ENCODE measurements at regions of chr12 and their contacts with region 1.

Region 1: DNA sequence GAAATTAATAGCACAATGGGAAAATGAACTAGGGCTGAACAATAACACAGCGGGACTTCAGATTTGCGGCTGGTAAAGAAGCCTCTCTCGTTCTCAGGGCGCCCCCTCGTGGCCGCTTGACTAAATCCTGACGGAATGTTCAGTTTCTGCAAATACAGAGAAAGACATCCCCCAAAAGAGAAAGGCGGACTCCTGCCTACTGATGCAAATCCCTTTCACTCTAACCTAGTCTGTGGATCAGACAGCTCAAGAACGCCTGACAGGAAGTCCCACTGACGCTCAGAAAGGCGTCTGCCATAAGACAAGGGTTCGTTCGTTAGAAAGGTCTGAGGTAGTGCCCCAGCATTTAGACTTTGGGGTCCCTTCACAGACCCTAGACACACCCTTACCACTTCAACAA is 2.5 kb downstream of the NUAK1 start:
- DNase-seq: peak; percentile 90 to 97
- ATAC-seq: peak; percentile 59
- H3K4me3 ChIP-seq: peak overlapping the region; percentile 37 to 80
- H3K27ac ChIP-seq: peak overlapping the region; percentile 81 to 89
- H3K4me1 ChIP-seq: peaks cover 2 to 8% of the 10 kb centered on the region in 2 donors
- H3K27me3 ChIP-seq: no peaks in the 10 kb centered on the region

Region 2: GRCh38 chr12:105705765-105706164 is 430.5 kb before region 1 on chr12:
- intact Hi-C with region 1: loop called (anchors 2 kb)
- DNase-seq: peak in 1 of 2 donors; percentile 54
- ATAC-seq: peak; percentile 79
- H3K4me3 ChIP-seq: no peak overlapping the region
- H3K27ac ChIP-seq: peak overlapping the region; percentile 80 to 93
- H3K4me1 ChIP-seq: no peaks in the 10 kb centered on the region
- H3K27me3 ChIP-seq: no peaks in the 10 kb centered on the region

Region 3: GRCh38 chr12:105748806-105749600 is 387.3 kb before region 1 on chr12:
- intact Hi-C with region 1: loop called (anchors 5 to 10 kb)
- DNase-seq: peak; percentile 87
- ATAC-seq: peak; percentile 79
- H3K4me3 ChIP-seq: no peak overlapping the region
- H3K27ac ChIP-seq: peak overlapping the region; percentile 83 to 96
- H3K4me1 ChIP-seq: peaks cover 5 to 9% of the 10 kb centered on the region in 2 donors
- H3K27me3 ChIP-seq: no peaks in the 10 kb centered on the region

Region 4: DNA sequence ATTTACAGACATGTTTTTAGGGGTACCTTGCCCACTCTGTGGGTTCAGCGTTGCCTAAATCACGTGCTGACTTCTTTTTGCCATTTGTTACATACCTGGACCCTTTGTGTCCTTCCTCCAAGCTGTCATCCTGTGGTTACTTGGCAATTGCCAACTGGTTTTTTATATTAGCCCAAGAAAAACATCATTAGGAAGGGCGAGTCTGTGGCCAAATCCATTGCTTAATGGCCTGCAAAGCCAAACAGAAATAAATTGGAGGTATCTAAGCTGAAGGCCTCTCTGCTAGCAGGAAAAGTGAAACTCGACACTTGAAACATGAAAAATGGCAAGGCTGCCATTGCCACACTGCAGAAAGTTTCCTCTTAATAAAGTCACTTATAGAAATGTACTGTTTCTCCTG is 187.9 kb before region 1 on chr12:
- intact Hi-C with region 1: loop called in 1 of 2 experiments (anchors 2 kb)
- DNase-seq: peak in 1 of 2 donors; percentile 50
- ATAC-seq: peak; percentile 64
- H3K4me3 ChIP-seq: no peak overlapping the region
- H3K27ac ChIP-seq: peak overlapping the region; percentile 65 to 76
- H3K4me1 ChIP-seq: peaks cover 2 to 12% of the 10 kb centered on the region in 2 donors
- H3K27me3 ChIP-seq: no peaks in the 10 kb centered on the region

Region 5: GRCh38 chr12:106074706-106075392 is 61.4 kb before region 1 on chr12:
- intact Hi-C with region 1: no loop called
- DNase-seq: peak in 1 of 2 donors; percentile 45
- ATAC-seq: peak; percentile 55
- H3K4me3 ChIP-seq: no peak overlapping the region
- H3K27ac ChIP-seq: peak overlapping the region; percentile 68 to 69
- H3K4me1 ChIP-seq: peaks cover 3 to 14% of the 10 kb centered on the region in 2 donors
- H3K27me3 ChIP-seq: no peaks in the 10 kb centered on the region

Region 6: DNA sequence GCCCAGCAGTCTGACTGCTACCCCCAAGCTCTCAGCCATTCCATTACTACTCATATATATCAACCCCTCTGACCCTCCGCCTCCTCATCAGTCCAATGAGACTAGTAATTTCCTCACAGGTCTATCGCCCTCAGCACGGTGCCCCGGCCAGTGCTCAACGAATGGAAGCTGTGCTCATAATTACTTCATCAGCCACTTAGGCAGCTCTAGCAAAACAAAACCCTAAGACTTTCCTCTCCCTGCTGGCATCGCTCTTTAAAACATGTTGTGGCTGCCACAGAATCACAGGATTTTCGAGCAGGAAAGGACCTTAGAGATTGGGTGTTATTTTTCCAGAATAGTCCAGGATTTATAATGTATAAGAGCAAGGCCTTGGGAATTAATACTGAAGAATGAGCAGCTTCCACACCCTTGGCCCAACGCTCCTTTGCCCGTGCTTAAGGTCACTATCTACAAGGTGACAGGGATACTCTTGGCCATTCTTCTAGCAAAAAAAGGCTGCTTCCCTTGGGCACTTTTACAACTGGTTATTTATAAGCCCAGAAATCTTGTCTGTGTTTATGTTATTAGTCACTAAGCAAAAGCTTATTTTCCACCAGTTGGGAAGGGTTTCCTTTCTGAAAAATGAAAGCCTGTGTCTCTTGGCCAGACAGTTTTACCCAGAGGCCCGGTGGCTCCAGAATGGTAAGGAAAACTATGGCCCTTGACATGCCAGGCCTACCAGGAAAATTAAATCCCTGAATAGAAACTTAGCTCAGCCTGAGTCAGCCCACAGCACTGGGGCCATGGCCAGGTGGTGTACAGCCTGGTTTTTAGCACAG is 45.5 kb before region 1 on chr12:
- intact Hi-C with region 1: loop called (anchors 5 kb)
- DNase-seq: peak; percentile 85 to 86
- ATAC-seq: peak; percentile 87
- H3K4me3 ChIP-seq: no peak overlapping the region
- H3K27ac ChIP-seq: peak overlapping the region; percentile 79 to 99
- H3K4me1 ChIP-seq: peaks cover 2 to 13% of the 10 kb centered on the region in 2 donors
- H3K27me3 ChIP-seq: no peaks in the 10 kb centered on the region

Region 7: DNA sequence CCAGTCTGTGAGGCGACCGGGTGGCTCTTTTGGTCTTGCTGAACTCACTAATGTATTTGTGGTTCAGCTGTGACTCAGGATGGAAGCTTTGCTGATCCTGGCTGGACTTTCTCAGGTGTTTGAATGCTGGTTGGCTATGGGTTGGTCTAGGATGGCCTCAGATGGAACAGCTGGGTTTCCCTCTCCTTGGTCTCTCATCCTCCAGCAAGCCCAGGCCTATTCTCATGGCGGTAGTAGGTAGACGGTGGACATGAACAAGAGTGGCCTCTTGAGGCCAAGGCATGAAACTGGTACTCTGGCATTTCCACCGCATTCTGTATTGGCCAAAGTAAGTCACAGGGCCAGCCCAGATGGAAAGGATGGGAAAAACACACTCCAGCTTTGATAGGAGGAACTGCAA is 209.5 kb after region 1 on chr12:
- intact Hi-C with region 1: no loop called
- DNase-seq: no peak
- ATAC-seq: no peak
- H3K4me3 ChIP-seq: no peak overlapping the region
- H3K27ac ChIP-seq: no peak overlapping the region
- H3K4me1 ChIP-seq: peaks cover 0 to 4% of the 10 kb centered on the region in 2 donors
- H3K27me3 ChIP-seq: no peaks in the 10 kb centered on the region

Region 8: DNA sequence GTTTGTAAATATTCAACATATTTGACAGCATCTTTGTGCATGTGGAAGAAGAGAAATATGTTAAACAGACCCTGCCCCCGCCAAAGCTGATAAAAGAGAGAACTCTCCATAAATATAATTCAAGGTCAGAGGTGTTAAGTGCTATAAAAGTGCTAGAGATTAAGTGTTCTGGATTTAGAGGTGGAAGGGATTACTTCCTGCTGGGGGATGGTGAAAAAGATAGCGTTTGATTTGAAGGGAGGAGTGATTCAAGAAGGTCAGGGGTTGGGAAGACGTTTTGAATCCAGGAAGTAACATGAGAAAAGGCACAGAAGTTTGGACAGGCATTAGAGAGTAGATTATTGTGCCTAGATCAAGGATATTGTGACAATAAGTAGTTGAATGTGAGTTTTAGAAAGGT is 668.4 kb after region 1 on chr12:
- intact Hi-C with region 1: no loop called
- DNase-seq: no peak
- ATAC-seq: no peak
- H3K4me3 ChIP-seq: no peak overlapping the region
- H3K27ac ChIP-seq: no peak overlapping the region
- H3K4me1 ChIP-seq: no peaks in the 10 kb centered on the region
- H3K27me3 ChIP-seq: no peaks in the 10 kb centered on the region

Measured in aorta (tissue), 5 donors.